Calu3 (cell line): ENCODE measurements at regions of chr3 and their contacts with region 1.

Region 1: DNA sequence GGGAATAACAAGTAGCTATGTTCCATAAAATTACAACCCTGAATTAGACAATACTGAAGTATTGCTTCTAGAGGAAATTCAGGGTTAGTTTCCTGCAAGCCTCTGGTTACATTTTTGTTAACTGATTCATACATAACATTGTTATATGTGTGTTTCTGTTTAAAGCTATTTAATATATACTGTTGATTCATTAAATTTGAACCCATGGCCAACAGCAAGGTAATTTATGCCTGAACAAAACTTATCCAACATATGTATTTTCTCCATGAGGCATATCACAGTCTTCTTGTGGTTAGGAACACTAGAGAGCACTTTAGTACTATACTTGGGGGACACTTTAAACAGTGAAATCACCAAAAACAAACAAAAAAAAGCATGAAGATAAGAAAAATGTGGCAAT is 47.7 kb upstream of the PTX3 start:
- DNase-seq: no peak
- H3K4me3 Mint-ChIP-seq: no peak overlapping the region
- H3K27ac Mint-ChIP-seq: no peak overlapping the region
- H3K4me1 Mint-ChIP-seq: peaks cover 9% of the 10 kb centered on the region
- H3K27me3 Mint-ChIP-seq: no peaks in the 10 kb centered on the region
- CTCF ChIP-seq: no peak

Region 2: GRCh38 chr3:156341831-156342416 is 1047.1 kb before region 1 on chr3:
- CTCF ChIA-PET with region 1: no interaction called
- intact Hi-C with region 1: loop called (anchors 5 kb)
- DNase-seq: no peak
- H3K4me3 Mint-ChIP-seq: no peak overlapping the region
- H3K27ac Mint-ChIP-seq: no peak overlapping the region
- H3K4me1 Mint-ChIP-seq: no peaks in the 10 kb centered on the region
- H3K27me3 Mint-ChIP-seq: peaks cover 29% of the 10 kb centered on the region
- CTCF ChIP-seq: no peak

Region 3: GRCh38 chr3:157239082-157239704 is 149.8 kb before region 1 on chr3:
- CTCF ChIA-PET with region 1: no interaction called
- intact Hi-C with region 1: no loop called
- DNase-seq: peak; percentile 93
- H3K4me3 Mint-ChIP-seq: no peak overlapping the region
- H3K27ac Mint-ChIP-seq: no peak overlapping the region
- H3K4me1 Mint-ChIP-seq: peaks cover 8% of the 10 kb centered on the region
- H3K27me3 Mint-ChIP-seq: no peaks in the 10 kb centered on the region
- CTCF ChIP-seq: peak; percentile 97